Activated CD8-positive, alpha-beta memory T cell treated with anti-CD3 and anti-CD28 coated beads, Interleukin-2, amount 10 ng/mL, durations not matched to agents 7 days and 5 days (primary cell): ENCODE measurements at regions of chr9 and their contacts with region 1.

Region 1: DNA sequence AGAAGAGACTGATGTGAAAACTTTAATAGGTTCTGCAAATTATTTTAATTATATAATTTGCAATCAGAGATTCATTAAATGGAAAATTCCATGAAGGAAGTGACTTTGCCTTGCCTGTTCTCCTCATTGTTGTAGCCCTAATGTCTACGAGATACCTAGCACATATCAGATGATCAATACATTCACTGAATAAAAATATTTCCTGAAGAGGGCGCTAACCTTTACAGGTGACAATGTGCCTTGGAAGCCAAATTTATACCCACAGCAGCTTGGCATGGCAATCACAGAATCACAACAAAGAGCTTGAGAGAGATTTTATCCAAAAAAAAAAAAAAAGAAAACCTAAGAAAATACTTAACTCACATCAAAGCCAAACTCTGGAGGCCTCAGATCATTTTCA is 17.4 kb downstream of the HAUS6 start:
- DNase-seq: no peak
- ATAC-seq: peak; percentile 47
- H3K4me3 Mint-ChIP-seq: no peak overlapping the region
- H3K27ac Mint-ChIP-seq: peak overlapping the region; percentile 2
- H3K4me1 Mint-ChIP-seq: no peaks in the 10 kb centered on the region
- H3K27me3 Mint-ChIP-seq: no peaks in the 10 kb centered on the region

Region 2: GRCh38 chr9:18791074-18791473 is 294.2 kb before region 1 on chr9:
- CTCF ChIA-PET with region 1: no interaction called
- DNase-seq: no peak
- ATAC-seq: no peak
- H3K4me3 Mint-ChIP-seq: no peak overlapping the region
- H3K27ac Mint-ChIP-seq: no peak overlapping the region
- H3K4me1 Mint-ChIP-seq: no peaks in the 10 kb centered on the region
- H3K27me3 Mint-ChIP-seq: peaks cover 4% of the 10 kb centered on the region

Region 3: DNA sequence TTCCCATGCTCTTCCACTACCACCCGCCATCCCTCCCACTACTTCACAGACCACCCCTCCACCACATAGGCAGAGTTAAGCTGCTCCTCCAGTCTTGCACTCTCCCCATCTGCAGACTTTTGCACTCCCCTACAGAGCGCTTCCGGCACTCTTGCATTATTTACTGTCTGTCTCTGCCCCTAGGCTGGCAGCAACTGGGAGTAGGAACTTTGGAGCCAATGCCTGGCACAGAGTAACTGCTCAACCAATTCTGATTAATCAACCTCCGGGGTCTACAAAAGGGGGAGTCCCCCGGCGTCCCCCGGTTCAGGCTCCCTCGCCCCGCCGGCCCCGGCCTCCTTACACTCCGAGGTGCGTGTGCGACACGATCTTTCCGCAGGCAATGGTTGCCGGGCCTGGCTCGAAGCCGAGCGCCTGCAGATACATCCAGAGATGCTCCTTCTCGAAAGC is 16.9 kb after region 1 on chr9:
- CTCF ChIA-PET with region 1: interaction called, 12 read pairs
- DNase-seq: peak; percentile 70
- ATAC-seq: peak; percentile 37
- H3K4me3 Mint-ChIP-seq: peak overlapping the region; percentile 85
- H3K27ac Mint-ChIP-seq: peak overlapping the region; percentile 97
- H3K4me1 Mint-ChIP-seq: peaks cover 38% of the 10 kb centered on the region
- H3K27me3 Mint-ChIP-seq: no peaks in the 10 kb centered on the region

Region 4: GRCh38 chr9:19162956-19163355 is 77.7 kb after region 1 on chr9:
- CTCF ChIA-PET with region 1: no interaction called
- DNase-seq: no peak
- ATAC-seq: no peak
- H3K4me3 Mint-ChIP-seq: no peak overlapping the region
- H3K27ac Mint-ChIP-seq: no peak overlapping the region
- H3K4me1 Mint-ChIP-seq: peaks cover 20% of the 10 kb centered on the region
- H3K27me3 Mint-ChIP-seq: no peaks in the 10 kb centered on the region